Spleen (tissue), 13 donors: ENCODE measurements at regions of chr5 and their contacts with region 1.

Region 1: DNA sequence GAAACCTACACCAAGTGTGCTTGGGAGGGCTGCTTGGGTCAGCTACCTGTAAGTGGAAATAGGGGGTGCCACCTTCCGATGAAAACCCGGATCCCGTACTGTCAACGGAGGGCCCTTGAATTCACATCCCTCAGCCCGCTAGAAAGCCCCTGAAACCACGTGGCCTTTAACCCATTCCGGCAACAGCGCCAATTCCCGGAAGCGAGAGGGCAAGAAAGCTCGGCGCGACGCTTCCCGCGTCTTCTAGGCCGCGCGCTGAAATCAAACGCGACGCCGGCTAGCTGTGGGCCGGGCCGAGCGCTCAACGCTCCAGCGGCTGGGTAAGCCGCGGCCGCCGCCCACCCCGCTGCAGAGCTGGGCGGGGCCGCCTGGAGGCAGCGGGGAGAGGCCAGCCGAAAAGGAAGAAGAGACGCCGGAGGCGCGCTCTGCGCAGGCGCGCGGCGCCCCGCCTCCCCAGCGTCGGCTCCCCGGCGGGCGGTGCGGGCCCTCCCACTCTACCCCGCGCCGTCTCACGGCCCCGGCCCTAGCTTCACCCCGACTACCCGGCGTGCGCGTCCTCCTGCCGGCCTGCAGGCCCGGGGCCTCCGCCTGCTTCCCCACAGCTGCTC is at the start of gene KIF2A:
- DNase-seq: peak; percentile 98
- H3K4me3 ChIP-seq: peak within 1 kb of the TSS; percentile 78 to 99 (median 95)
- H3K27ac ChIP-seq: peak within 1 kb of the TSS; percentile 87 to 98 (median 94)
- H3K4me1 ChIP-seq: peaks cover 15 to 50% (median 43%) of the 10 kb centered on the region in 6 donors
- H3K27me3 ChIP-seq: no peaks in the 10 kb centered on the region
- CTCF ChIP-seq: peak in 9 of 11 experiments; percentile 17 to 67 (median 40)
- POLR2A ChIP-seq: no peak
- total RNA-seq, gene KIF2A: 40.9 to 66.7 (median 48.0) TPM

Region 2: DNA sequence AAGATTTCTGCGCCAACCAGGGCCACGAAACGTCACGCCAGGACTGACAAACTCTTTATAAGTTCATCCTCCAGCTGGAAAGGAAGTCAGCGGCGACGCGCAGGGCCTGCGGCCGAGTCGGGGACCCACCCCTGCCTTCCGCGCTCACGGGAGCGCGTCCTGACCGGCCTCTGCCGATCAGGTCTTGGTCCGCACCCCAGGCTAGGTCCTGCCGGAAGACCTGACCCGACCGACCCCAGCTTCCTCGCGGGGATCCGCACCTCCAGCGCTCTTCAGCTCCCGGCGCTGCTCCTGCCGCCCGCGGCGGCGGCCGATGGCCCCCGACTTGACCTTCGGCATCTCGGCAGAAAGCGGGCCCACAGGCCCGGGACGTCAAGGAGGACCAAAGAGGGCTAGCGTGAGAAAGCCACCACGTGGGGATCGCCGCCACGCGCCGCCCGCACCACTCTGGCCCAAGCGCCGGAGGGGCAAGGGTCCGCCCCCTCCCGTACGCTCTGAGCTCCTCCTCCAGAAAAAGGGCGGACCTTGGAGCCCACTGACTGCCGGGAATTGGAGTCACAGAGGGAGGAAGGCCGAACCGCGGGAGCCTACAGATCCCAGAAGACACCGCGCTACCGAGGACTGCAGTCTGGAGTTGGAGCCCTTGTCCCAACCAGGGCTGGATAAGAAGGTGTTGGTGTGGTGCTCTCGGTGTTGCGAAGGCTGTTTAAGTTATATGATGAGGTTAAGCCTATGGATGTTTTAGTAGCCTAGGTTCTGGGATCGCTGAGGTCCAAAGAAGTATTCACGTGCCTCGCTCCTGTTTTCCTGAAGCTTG is 97.8 kb after region 1 on chr5 and contains the start of gene DIMT1:
- intact Hi-C with region 1: loop called (anchors 10 kb)
- DNase-seq: peak; percentile 98
- H3K4me3 ChIP-seq: peak within 1 kb of the TSS; percentile 76 to 98 (median 90)
- H3K27ac ChIP-seq: peak within 1 kb of the TSS; percentile 90 to 99 (median 97)
- H3K4me1 ChIP-seq: peaks cover 8 to 32% (median 25%) of the 10 kb centered on the region in 6 donors
- H3K27me3 ChIP-seq: no peaks in the 10 kb centered on the region
- CTCF ChIP-seq: peak in 3 of 11 experiments; percentile 8 to 30 (median 25)
- POLR2A ChIP-seq: peak in 1 of 3 donors; percentile 51
- total RNA-seq, gene DIMT1: 24.0 to 30.0 (median 25.8) TPM